WTC11 (cell line): ENCODE measurements at regions of chr20 and their contacts with region 1.

Region 1: GRCh38 chr20:21808863-21809664 is 103.6 kb downstream of the PAX1 start:
- DNase-seq: peak; percentile 89
- ATAC-seq: peak; percentile 90
- H3K4me3 Mint-ChIP-seq: no peak overlapping the region
- H3K27ac Mint-ChIP-seq: no peak overlapping the region
- H3K4me1 Mint-ChIP-seq: peaks cover 2% of the 10 kb centered on the region; the same call in 1 of the 2 replicates
- H3K27me3 Mint-ChIP-seq: peaks cover 19% of the 10 kb centered on the region
- CTCF ChIP-seq: peak; percentile 99

Region 2: DNA sequence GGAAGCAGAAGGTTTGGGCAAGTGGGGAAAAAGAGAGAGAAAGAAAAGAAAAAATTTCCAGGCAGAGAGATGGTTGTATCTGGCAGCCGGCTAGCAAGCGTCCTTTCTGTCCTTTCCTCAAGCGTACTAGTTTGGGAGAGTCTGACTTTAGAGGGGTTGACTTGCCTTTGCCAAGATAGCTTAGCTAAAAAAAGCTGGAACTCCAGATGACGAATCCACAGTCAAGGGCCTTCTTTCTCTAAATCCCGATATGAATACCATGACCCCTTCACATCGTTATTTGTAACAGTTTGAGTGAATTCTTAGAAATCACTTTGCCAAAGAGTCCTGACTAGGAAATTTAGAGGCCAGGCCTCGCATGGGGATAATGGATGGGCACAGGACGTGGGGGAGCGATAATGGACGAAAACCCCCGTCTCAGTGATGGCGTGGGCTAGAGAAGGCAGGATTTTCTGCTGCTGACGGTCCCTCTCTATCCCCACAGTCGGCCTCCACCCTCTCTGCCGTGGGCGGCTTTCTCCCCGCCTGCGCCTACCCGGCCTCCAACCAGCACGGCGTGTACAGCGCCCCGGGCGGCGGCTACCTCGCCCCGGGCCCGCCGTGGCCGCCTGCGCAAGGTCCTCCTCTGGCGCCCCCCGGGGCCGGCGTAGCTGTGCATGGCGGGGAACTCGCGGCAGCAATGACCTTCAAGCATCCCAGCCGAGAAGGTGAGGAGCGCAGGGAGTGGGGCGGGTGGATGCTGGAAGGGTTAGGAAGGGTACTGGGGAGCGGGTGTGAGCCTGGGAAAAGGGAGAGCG is 100.1 kb before region 1 on chr20:
- CTCF ChIA-PET with region 1: no interaction called
- POLR2A ChIA-PET with region 1: no interaction called
- DNase-seq: peak; percentile 30
- ATAC-seq: no peak
- H3K4me3 Mint-ChIP-seq: 0 out of 2 replicates have a peak overlapping the region, but pooled peaks have one; percentile 9
- H3K27ac Mint-ChIP-seq: no peak overlapping the region
- H3K4me1 Mint-ChIP-seq: peaks cover 46% of the 10 kb centered on the region
- H3K27me3 Mint-ChIP-seq: peaks cover 98% of the 10 kb centered on the region
- CTCF ChIP-seq: no peak

Region 3: DNA sequence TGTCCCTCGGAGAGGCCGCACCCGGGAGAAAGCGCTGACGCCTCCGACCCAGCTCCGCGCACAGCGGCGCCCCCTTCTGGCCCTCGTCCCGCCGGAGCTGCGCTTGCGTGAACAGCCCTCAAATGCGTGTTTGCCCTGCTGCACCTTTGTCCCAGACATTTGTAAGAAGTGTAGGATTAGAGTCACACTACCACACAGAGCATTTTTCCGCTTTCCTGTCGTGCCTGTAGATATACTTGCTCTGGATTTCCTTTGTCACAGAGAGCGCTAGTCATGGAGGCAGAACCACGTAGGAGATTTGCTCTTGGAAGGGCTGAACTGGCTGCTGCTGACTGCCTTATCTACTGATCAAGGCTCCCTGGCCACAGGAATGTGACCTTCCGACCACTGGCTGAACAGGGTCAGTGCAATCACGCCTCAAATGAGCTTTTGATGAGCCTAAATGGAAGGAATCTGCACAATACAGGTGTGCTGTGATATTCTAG is 41.3 kb before region 1 on chr20:
- CTCF ChIA-PET with region 1: interaction called, 13 read pairs
- POLR2A ChIA-PET with region 1: no interaction called
- DNase-seq: peak; percentile 89
- ATAC-seq: peak; percentile 97
- H3K4me3 Mint-ChIP-seq: peak overlapping the region; percentile 48
- H3K27ac Mint-ChIP-seq: no peak overlapping the region
- H3K4me1 Mint-ChIP-seq: peaks cover 4% of the 10 kb centered on the region
- H3K27me3 Mint-ChIP-seq: peaks cover 18% of the 10 kb centered on the region
- CTCF ChIP-seq: peak; percentile 59; the same call in 1 of the 2 replicates

Region 4: DNA sequence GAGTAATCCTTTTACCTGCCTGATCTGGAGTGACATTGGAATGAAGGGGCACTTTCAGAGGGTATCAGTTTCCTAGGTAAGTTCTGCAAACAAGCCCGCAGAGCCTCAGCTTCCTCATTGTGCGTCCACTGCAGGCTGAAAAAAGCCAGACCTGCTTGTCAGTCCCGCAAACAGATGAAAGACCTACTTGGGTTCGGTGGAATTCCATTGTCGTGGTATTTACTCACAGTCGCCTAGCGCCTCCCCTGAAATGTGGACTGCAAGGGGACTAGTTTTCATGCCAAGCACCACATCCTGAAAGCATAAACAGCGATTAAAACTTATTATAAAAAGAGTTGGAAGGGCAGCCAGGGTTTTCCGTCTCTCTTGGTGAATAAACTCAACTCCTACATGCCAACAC is 17.9 kb after region 1 on chr20:
- CTCF ChIA-PET with region 1: interaction called, 12 read pairs
- POLR2A ChIA-PET with region 1: no interaction called
- DNase-seq: peak; percentile 21
- ATAC-seq: peak; percentile 78
- H3K4me3 Mint-ChIP-seq: no peak overlapping the region
- H3K27ac Mint-ChIP-seq: no peak overlapping the region
- H3K4me1 Mint-ChIP-seq: peaks cover 10% of the 10 kb centered on the region
- H3K27me3 Mint-ChIP-seq: no peaks in the 10 kb centered on the region
- CTCF ChIP-seq: no peak

Region 5: GRCh38 chr20:22098511-22098910 is 289.4 kb after region 1 on chr20:
- CTCF ChIA-PET with region 1: interaction called, 14 read pairs
- POLR2A ChIA-PET with region 1: no interaction called
- DNase-seq: no peak
- ATAC-seq: no peak
- H3K4me3 Mint-ChIP-seq: no peak overlapping the region
- H3K27ac Mint-ChIP-seq: no peak overlapping the region
- H3K4me1 Mint-ChIP-seq: no peaks in the 10 kb centered on the region
- H3K27me3 Mint-ChIP-seq: no peaks in the 10 kb centered on the region; the same call in 1 of the 2 replicates
- CTCF ChIP-seq: no peak